Sigmoid colon (tissue), 7 donors: ENCODE measurements at regions of chr12 and their contacts with region 1.

Region 1: GRCh38 chr12:80186727-80187217 is 87.4 kb downstream of the OTOGL start:
- DNase-seq: peak; percentile 82
- H3K4me3 ChIP-seq: no peak overlapping the region
- H3K27ac ChIP-seq: peak overlapping the region; percentile 80 to 86 (median 84)
- H3K4me1 ChIP-seq: peaks cover 0 to 42% (median 16%) of the 10 kb centered on the region in 4 donors
- H3K27me3 ChIP-seq: no peaks in the 10 kb centered on the region
- CTCF ChIP-seq: peak; percentile 67 to 74 (median 70)
- EP300 ChIP-seq: peak in 3 of 4 donors; percentile 53 to 86 (median 75)
- POLR2A ChIP-seq: no peak

Region 2: DNA sequence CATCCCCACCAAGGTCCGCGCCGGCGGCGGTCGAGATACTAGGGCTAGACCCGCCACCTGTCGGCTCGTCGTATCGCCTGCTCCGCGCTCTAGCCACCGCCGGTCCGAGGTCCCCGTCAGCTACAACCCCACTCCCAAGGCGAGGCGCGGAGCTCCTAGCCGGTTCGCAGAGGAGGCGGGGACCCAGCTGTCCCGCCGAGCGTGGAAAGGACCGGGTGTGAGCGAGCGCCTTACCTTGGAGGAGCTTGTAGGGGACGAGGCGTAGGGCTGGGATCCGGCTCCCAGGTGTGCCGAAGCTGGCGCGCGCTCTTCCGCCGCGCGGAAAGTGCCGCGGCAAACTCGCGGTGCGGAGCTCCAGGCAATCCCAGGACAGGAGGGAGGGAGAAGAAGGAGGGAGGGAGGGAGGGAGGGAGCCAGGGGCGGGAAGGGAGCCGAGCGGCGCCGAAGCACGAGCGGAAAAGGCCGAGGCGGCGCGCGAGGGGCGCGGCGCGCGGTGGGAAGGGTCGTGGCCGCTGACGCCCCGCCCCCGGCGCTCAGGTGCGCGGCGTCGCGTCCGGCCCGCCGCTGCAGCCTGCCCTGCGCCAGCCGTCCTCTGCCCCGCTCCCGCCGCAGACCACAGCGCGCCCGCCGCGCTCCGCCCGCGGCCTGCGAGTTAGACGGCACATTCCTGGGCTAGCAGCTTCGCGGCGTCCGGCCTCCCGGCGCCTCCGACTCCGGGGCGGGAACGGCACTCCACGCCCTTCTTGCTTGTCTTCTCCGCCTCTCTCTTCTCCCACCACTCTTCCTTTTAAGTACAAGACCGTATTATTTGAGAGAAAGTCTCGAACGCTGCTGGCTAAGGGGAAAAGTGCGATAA is 495.9 kb before region 1 on chr12 and contains the start of gene PAWR:
- intact Hi-C with region 1: loop called (anchors 2 kb)
- DNase-seq: peak; percentile 71
- H3K4me3 ChIP-seq: peak within 1 kb of the TSS; percentile 69 to 88 (median 86)
- H3K27ac ChIP-seq: peak within 1 kb of the TSS; percentile 83 to 91 (median 87)
- H3K4me1 ChIP-seq: peaks cover 0 to 36% (median 9%) of the 10 kb centered on the region in 4 donors
- H3K27me3 ChIP-seq: no peaks in the 10 kb centered on the region
- CTCF ChIP-seq: peak in 1 of 4 experiments; percentile 30
- EP300 ChIP-seq: no peak
- POLR2A ChIP-seq: no peak
- total RNA-seq, gene PAWR: 22.1 to 53.5 (median 30.2) TPM

Region 3: GRCh38 chr12:79725841-79726386 is 460.9 kb before region 1 on chr12:
- intact Hi-C with region 1: no loop called
- DNase-seq: no peak
- H3K4me3 ChIP-seq: no peak overlapping the region
- H3K27ac ChIP-seq: no peak overlapping the region
- H3K4me1 ChIP-seq: no peaks in the 10 kb centered on the region
- H3K27me3 ChIP-seq: no peaks in the 10 kb centered on the region
- CTCF ChIP-seq: no peak
- EP300 ChIP-seq: no peak
- POLR2A ChIP-seq: no peak

Region 4: DNA sequence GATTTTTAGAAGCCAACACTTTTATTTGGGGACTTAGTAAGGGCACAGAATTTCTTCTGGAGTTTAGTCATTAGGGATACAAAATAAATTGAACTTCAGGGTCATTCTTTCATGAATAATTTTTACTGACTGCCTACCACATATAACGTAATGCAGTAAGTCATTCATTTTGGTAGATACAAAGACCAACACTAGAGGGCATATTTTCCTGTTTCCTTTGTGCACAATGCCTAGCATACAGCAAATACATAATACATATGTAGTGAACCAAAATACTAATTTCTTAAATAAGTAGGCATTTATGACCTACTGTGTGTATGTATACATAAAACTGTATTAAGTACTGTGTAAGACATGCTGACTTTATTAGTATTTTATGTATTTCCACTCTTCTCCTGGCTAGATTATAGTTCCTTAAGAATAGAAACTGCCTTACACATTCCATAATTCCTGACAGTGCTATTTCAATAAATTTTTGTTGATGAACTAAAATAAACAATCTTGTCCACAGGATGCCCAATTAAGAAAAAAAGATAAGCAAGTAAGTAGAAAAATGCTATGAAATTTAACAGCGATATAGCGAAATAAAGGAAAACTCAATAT is 299.8 kb before region 1 on chr12:
- intact Hi-C with region 1: loop called (anchors 5 kb)
- DNase-seq: no peak
- H3K4me3 ChIP-seq: no peak overlapping the region
- H3K27ac ChIP-seq: peak overlapping the region in 2 of 4 donors; percentile 36 to 49
- H3K4me1 ChIP-seq: peaks cover 0 to 97% (median 77%) of the 10 kb centered on the region in 4 donors
- H3K27me3 ChIP-seq: no peaks in the 10 kb centered on the region
- CTCF ChIP-seq: peak; percentile 22 to 47 (median 30)
- EP300 ChIP-seq: no peak
- POLR2A ChIP-seq: no peak

Region 5: DNA sequence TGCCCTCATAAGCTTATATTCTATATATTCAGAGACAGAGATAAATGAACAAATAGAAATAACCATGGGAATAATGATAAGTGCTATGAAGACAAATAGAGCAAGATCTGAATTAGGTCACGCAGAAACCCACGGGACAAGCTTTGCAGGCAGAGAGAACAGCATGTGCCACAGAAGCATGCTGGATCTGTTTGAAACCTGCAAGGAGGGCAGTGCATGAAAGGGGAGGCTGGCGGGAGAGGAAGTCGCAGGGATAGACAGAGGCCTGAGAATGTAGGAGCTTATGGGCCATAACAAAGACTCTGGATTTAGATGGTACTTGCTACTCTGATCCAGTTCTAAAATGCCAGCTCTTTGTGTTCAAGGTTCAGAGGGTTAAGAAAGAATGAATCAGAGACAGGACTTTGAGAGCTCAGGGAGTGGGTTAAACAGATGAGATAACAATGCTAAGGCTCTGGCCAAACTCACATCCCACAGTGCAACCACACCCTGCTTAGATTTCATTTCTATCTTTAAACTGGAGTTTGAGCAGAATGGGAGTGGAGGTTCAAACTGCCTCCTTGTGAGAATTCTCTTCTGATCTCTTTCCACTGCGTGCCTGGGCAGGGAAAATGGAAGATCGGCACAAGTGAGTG is 202.7 kb before region 1 on chr12:
- intact Hi-C with region 1: loop called (anchors 5 kb)
- DNase-seq: no peak
- H3K4me3 ChIP-seq: no peak overlapping the region
- H3K27ac ChIP-seq: peak overlapping the region in 3 of 4 donors; percentile 20 to 33 (median 28)
- H3K4me1 ChIP-seq: peaks cover 0 to 18% (median 8%) of the 10 kb centered on the region in 4 donors
- H3K27me3 ChIP-seq: no peaks in the 10 kb centered on the region
- CTCF ChIP-seq: no peak
- EP300 ChIP-seq: no peak
- POLR2A ChIP-seq: no peak